Aorta (tissue), 5 donors: ENCODE measurements at regions of chrX and their contacts with region 1.

Region 1: GRCh38 chrX:123771449-123772064 is 38.7 kb upstream of the THOC2 start:
- DNase-seq: no peak
- ATAC-seq: no peak
- H3K4me3 ChIP-seq: no peak overlapping the region
- H3K27ac ChIP-seq: no peak overlapping the region
- H3K4me1 ChIP-seq: no peaks in the 10 kb centered on the region
- H3K27me3 ChIP-seq: no peaks in the 10 kb centered on the region

Region 2: DNA sequence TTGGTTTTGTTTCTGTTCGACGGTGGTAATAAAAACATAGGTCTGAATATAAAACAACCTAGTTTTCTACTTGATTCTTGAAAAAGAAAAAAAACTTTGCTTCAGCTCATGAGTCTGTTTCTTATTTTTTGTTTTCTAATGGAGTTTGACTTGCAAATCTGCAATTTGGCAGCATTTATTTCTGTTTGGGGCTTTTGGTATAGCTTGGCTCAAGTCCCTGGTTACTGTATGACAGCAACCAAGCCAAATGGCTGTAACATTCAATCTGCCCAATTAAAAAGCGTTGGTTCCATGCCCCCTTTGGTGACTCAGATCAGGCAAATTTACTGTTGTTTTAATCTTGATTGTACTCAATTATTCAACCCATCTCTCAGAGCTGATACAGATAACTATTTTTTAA is 324.1 kb before region 1 on chrX:
- intact Hi-C with region 1: loop called in 1 of 2 experiments (anchors 5 kb)
- DNase-seq: no peak
- ATAC-seq: no peak
- H3K4me3 ChIP-seq: no peak overlapping the region
- H3K27ac ChIP-seq: no peak overlapping the region
- H3K4me1 ChIP-seq: no peaks in the 10 kb centered on the region
- H3K27me3 ChIP-seq: no peaks in the 10 kb centered on the region